IMR-90 (cell line): ENCODE measurements at regions of chr3 and their contacts with region 1.

Region 1: DNA sequence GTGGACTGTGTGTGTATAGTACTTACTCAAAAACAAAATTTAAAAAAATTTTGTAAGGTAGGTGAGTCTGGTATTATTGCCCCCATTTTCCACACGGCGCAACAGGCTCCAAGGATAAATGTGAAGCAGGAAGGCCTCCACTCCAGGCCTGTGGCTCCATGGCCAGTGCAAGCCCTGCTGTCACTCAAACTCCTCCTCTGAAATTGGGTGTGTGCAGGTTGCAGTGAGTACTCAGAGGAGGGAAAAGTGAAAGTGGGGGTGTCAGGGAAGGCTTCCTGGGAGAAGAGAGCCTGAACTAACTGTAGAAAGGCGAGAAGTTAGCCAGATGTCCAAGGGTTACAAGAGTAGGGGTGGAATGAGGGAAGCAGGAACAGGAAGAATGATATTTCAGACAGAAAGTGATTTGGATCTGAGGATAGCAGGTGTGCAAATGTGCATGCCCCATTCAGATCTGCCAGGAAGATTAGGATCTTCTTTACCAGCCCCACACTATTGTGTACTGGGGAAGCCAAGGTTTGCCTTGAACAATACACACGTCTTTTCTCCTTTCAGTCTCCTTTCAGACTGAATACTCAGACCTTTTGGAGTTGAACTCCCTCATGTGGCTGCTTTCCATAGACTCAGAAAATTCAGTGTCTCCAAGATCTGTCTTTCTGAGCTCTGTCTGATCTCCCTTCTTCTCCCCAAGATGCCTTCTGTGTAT is 48.7 kb upstream of the RYK start:
- DNase-seq: peak; percentile 53
- ATAC-seq: peak; percentile 87
- H3K4me3 ChIP-seq: no peak overlapping the region
- H3K27ac ChIP-seq: no peak overlapping the region
- H3K4me1 ChIP-seq: no peaks in the 10 kb centered on the region
- H3K27me3 ChIP-seq: no peaks in the 10 kb centered on the region
- CTCF ChIP-seq: peak; percentile 49
- POLR2A ChIP-seq: no peak
- RAD21 ChIP-seq: peak; percentile 46

Region 2: DNA sequence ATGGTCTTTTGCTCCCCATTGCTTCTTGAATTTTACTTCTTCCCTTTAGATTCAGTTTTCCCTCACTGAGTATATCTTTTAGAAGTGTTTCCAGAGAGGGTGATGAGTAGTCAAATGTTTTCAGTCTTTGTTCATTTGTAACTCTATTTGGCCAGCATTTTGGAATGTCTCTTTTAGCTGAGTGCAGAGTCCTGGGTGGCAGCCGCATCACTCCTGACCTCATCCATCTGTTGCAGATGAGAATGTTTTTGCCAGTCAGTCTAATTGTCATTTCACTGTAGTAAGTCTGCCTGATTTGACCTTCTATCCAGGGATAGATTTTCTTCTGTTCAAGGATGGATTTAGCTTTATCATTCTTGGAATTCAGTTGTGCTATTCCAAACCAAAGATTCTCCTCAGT is 486.5 kb before region 1 on chr3:
- CTCF ChIA-PET with region 1: no interaction called
- POLR2A ChIA-PET with region 1: no interaction called
- dilution Hi-C with region 1: no loop called
- in situ Hi-C with region 1: no loop called
- intact Hi-C with region 1: loop called (anchors 5 kb)
- DNase-seq: peak; percentile 40
- ATAC-seq: peak; percentile 54
- H3K4me3 ChIP-seq: no peak overlapping the region
- H3K27ac ChIP-seq: no peak overlapping the region
- H3K4me1 ChIP-seq: no peaks in the 10 kb centered on the region
- H3K27me3 ChIP-seq: no peaks in the 10 kb centered on the region
- CTCF ChIP-seq: no peak
- POLR2A ChIP-seq: no peak
- RAD21 ChIP-seq: no peak

Region 3: GRCh38 chr3:134197681-134198261 is 101.6 kb before region 1 on chr3:
- CTCF ChIA-PET with region 1: no interaction called
- POLR2A ChIA-PET with region 1: no interaction called
- dilution Hi-C with region 1: no loop called
- in situ Hi-C with region 1: no loop called
- intact Hi-C with region 1: loop called (anchors 2 kb)
- DNase-seq: peak; percentile 83
- ATAC-seq: peak; percentile 71
- H3K4me3 ChIP-seq: no peak overlapping the region
- H3K27ac ChIP-seq: no peak overlapping the region
- H3K4me1 ChIP-seq: peaks cover 10% of the 10 kb centered on the region
- H3K27me3 ChIP-seq: no peaks in the 10 kb centered on the region
- CTCF ChIP-seq: peak; percentile 90
- POLR2A ChIP-seq: no peak
- RAD21 ChIP-seq: peak; percentile 80

Region 4: GRCh38 chr3:134222835-134223234 is 76.5 kb before region 1 on chr3:
- CTCF ChIA-PET with region 1: no interaction called
- POLR2A ChIA-PET with region 1: no interaction called
- dilution Hi-C with region 1: no loop called
- in situ Hi-C with region 1: no loop called
- intact Hi-C with region 1: loop called (anchors 2 kb)
- DNase-seq: no peak
- ATAC-seq: no peak; the same call in 1 of the 2 replicates
- H3K4me3 ChIP-seq: no peak overlapping the region
- H3K27ac ChIP-seq: no peak overlapping the region
- H3K4me1 ChIP-seq: peaks cover 7% of the 10 kb centered on the region
- H3K27me3 ChIP-seq: no peaks in the 10 kb centered on the region
- CTCF ChIP-seq: no peak
- POLR2A ChIP-seq: no peak
- RAD21 ChIP-seq: no peak

Region 5: GRCh38 chr3:134250717-134251220 is 48.6 kb before region 1 on chr3 and contains the start of gene RYK:
- CTCF ChIA-PET with region 1: no interaction called
- POLR2A ChIA-PET with region 1: no interaction called
- dilution Hi-C with region 1: no loop called
- in situ Hi-C with region 1: no loop called
- intact Hi-C with region 1: loop called (anchors 5 kb)
- DNase-seq: peak; percentile 64
- ATAC-seq: peak; percentile 87
- H3K4me3 ChIP-seq: peak within 1 kb of the TSS; percentile 71
- H3K27ac ChIP-seq: peak within 1 kb of the TSS; percentile 87
- H3K4me1 ChIP-seq: peaks cover 7% of the 10 kb centered on the region
- H3K27me3 ChIP-seq: no peaks in the 10 kb centered on the region
- CTCF ChIP-seq: no peak
- POLR2A ChIP-seq: no peak
- RAD21 ChIP-seq: no peak
- total RNA-seq, gene RYK: 106 TPM in 2 replicates